ENCODE measurements at regions of chr11 and their contacts with region 1.

Region 1: GRCh38 chr11:43760902-43761301 is 80.4 kb downstream of the HSD17B12 start:
- DNase-seq: no peak

Region 2: GRCh38 chr11:43664295-43664694 is 96.6 kb before region 1 on chr11:
- intact Hi-C with region 1: no loop called
- DNase-seq: no peak

Region 3: DNA sequence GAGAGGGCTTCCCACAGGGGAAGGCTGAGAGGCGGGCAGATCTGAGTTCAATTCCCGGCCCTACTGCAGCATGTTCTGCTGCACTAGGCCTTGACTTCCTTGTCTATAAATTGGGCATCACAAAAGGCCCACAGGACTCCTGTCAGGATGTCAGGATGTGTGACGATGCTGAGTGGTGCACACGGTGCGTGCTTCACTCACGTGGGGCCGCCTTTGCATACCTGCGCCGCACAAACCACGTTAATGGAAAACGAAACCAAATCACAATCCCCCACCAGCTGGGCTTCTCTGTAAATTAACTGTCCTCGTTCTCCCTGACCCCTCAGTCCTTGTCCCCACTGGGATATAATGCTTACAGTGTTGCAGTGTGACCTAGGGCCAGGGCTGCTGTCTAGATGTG is 933.5 kb after region 1 on chr11:
- intact Hi-C with region 1: loop called in 1 of 2 experiments (anchors 5 kb)
- DNase-seq: no peak